Activated CD4-positive, alpha-beta T cell treated with anti-CD3 and anti-CD28 coated beads, Interleukin-2, amount 10 ng/mL, durations not matched to agents 24 days and 14 days (primary cell): ENCODE measurements at regions of chr16 and their contacts with region 1.

Region 1: DNA sequence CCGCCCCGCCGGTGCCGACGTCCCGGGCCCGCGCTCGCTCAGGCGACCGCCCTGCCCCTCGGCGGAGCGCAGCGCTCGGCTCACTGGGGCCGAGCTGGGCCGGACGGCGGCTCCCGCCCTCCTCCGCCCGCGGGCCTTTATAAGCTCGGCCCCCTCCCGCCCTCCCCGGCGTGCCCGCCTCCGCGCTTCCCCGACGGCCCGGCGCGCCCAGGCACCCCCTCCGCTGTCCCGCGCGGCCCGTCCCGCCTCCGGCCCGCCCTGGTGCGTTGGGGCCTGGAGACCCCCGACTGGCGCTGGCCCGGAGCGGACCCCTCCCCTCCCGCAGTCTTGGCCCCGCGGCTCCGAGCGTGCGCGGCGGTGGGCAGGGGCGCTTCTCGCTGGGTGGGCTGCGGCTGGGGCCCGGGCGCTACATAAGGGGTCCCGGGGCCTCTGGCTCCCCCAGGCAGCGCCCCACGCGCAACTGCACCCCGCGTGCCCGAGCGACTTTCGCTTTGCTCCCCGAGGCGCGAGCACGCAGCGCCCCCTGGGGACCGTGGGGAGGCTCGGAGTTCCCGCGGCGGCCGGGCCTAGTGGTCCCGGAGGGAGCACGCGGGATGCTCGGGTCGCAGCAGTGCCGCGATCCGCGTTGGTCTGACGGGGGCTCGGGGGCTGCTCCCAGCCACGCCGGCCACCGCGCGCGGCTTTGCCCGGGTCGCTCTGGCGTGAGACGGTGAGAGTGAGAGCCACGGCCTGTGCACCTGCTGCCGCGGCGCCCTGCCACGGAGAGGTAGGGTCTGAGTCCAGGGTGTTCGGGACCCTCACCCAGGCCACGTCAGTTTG is at the start of gene PIEZO1:
- DNase-seq: peak; percentile 96
- H3K4me3 Mint-ChIP-seq: peak within 1 kb of the TSS; percentile 81
- H3K27ac Mint-ChIP-seq: peak within 1 kb of the TSS; percentile 81
- H3K4me1 Mint-ChIP-seq: peaks cover 43% of the 10 kb centered on the region
- H3K27me3 Mint-ChIP-seq: no peaks in the 10 kb centered on the region
- total RNA-seq, gene PIEZO1: 219 and 226 TPM in 2 replicates

Region 2: GRCh38 chr16:88706288-88706964 is 78.9 kb before region 1 on chr16 and contains the starts of genes CTU2 and RNF166:
- intact Hi-C with region 1: loop called (anchors 2 kb)
- DNase-seq: peak; percentile 98
- H3K4me3 Mint-ChIP-seq: peak within 1 kb of the TSS; percentile 88
- H3K27ac Mint-ChIP-seq: peak within 1 kb of the TSS; percentile 87
- H3K4me1 Mint-ChIP-seq: peaks cover 37% of the 10 kb centered on the region
- H3K27me3 Mint-ChIP-seq: no peaks in the 10 kb centered on the region
- total RNA-seq, gene CTU2: 68.8 and 69.9 TPM in 2 replicates
- total RNA-seq, gene RNF166: 47.3 and 49.7 TPM in 2 replicates

Region 3: GRCh38 chr16:88737298-88738150 is 47.8 kb before region 1 on chr16:
- intact Hi-C with region 1: loop called (anchors 1 kb)
- DNase-seq: peak; percentile 88
- H3K4me3 Mint-ChIP-seq: no peak overlapping the region
- H3K27ac Mint-ChIP-seq: no peak overlapping the region
- H3K4me1 Mint-ChIP-seq: no peaks in the 10 kb centered on the region
- H3K27me3 Mint-ChIP-seq: no peaks in the 10 kb centered on the region

Region 4: GRCh38 chr16:88743693-88744576 is 41.4 kb before region 1 on chr16:
- intact Hi-C with region 1: loop called (anchors 2 kb)
- DNase-seq: peak; percentile 91
- H3K4me3 Mint-ChIP-seq: no peak overlapping the region
- H3K27ac Mint-ChIP-seq: no peak overlapping the region
- H3K4me1 Mint-ChIP-seq: peaks cover 23% of the 10 kb centered on the region
- H3K27me3 Mint-ChIP-seq: no peaks in the 10 kb centered on the region

Region 5: DNA sequence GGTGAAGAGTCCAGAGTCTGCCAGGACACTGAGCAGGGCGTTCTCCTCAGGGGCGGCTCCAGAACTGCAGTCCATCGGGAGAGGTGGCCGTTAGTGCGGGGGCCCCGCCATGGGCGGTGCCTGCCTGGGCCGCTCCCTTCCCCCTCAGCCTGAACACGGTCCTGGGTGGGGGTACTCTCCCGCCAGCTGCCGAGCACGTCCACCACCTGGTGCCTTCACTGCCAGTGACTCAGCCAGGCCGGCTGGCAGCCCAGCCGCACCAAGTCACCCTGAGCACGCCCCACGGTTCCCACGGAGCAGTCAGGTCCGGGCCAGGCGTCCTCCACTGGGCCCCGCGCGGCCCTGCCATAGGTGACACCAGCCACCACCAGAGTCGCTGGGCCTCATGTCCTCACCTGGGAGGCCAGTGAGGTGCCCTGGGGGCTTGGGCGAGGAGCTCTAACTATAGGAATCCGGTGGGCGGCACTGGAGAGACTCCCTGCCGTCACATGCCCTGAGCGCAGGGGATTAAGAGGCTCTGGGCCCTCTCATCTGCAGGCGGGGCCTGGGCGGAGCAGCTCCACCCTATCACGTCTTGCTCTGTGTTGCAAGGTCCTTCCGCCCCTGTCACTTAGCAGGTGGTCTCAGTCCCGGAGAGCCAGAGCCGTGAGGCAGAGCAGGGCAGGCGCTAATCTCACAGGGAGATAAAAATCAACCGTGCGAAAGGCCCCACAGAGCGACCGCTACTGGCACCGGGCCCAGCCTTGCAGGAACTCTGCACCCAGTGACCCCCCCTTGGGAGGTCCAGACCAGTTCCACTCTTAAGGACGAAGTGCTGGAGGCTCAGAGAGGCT is 14.6 kb before region 1 on chr16:
- intact Hi-C with region 1: no loop called
- DNase-seq: no peak
- H3K4me3 Mint-ChIP-seq: no peak overlapping the region
- H3K27ac Mint-ChIP-seq: no peak overlapping the region
- H3K4me1 Mint-ChIP-seq: peaks cover 10% of the 10 kb centered on the region
- H3K27me3 Mint-ChIP-seq: no peaks in the 10 kb centered on the region

Region 6: GRCh38 chr16:88803264-88803987 is 18.1 kb after region 1 on chr16 and contains the start of gene CDT1:
- intact Hi-C with region 1: loop called (anchors 1 kb)
- DNase-seq: peak; percentile 97
- H3K4me3 Mint-ChIP-seq: peak within 1 kb of the TSS; percentile 83
- H3K27ac Mint-ChIP-seq: peak within 1 kb of the TSS; percentile 88
- H3K4me1 Mint-ChIP-seq: peaks cover 13% of the 10 kb centered on the region
- H3K27me3 Mint-ChIP-seq: no peaks in the 10 kb centered on the region
- total RNA-seq, gene CDT1: 93.2 and 98.3 TPM in 2 replicates

Region 7: GRCh38 chr16:88811769-88812512 is 26.6 kb after region 1 on chr16 and contains the start of gene APRT:
- intact Hi-C with region 1: loop called (anchors 2 kb)
- DNase-seq: peak; percentile 99
- H3K4me3 Mint-ChIP-seq: peak within 1 kb of the TSS; percentile 89
- H3K27ac Mint-ChIP-seq: peak within 1 kb of the TSS; percentile 95
- H3K4me1 Mint-ChIP-seq: peaks cover 15% of the 10 kb centered on the region
- H3K27me3 Mint-ChIP-seq: no peaks in the 10 kb centered on the region
- total RNA-seq, gene APRT: 312 and 314 TPM in 2 replicates

Region 8: GRCh38 chr16:88856828-88857733 is 71.8 kb after region 1 on chr16 and contains the starts of genes GALNS and TRAPPC2L:
- intact Hi-C with region 1: loop called (anchors 1 kb)
- DNase-seq: peak; percentile 100
- H3K4me3 Mint-ChIP-seq: peak within 1 kb of the TSS; percentile 99
- H3K27ac Mint-ChIP-seq: peak within 1 kb of the TSS; percentile 94
- H3K4me1 Mint-ChIP-seq: peaks cover 19% of the 10 kb centered on the region
- H3K27me3 Mint-ChIP-seq: no peaks in the 10 kb centered on the region
- total RNA-seq, gene GALNS: 23.2 and 23.4 TPM in 2 replicates
- total RNA-seq, gene TRAPPC2L: 62.1 and 67.1 TPM in 2 replicates